ENCODE measurements at regions of chr10 and their contacts with region 1.

Region 1: DNA sequence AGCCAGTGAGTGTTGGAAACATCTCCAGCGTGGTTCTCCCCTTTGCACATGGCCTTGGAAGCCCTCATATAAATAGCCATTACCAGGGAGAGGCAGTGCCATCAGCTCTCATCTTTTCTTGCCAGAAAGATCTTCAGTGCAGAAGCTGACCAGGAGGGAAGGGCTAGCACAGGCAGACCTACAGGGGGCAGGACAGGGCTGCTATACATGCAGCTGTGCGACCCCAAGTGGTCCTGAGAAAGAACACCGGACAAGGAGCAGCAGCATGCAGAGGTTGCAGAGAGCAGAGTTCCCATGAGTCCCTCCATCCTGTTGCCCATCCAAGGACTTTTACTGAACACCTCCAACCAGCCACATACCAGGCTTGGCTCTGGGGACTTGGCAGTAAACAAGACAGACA is 17.1 kb downstream of the GRID1 start:
- DNase-seq: no peak
- H3K4me3 ChIP-seq: no peak overlapping the region
- H3K27ac ChIP-seq: no peak overlapping the region
- H3K4me1 ChIP-seq: no peaks in the 10 kb centered on the region
- H3K27me3 ChIP-seq: no peaks in the 10 kb centered on the region
- CTCF ChIP-seq: no peak
- EP300 ChIP-seq: no peak
- POLR2A ChIP-seq: no peak

Region 2: GRCh38 chr10:86152354-86152753 is 197.1 kb before region 1 on chr10:
- intact Hi-C with region 1: loop called in 1 of 4 experiments (anchors 5 kb)
- DNase-seq: no peak
- H3K4me3 ChIP-seq: no peak overlapping the region
- H3K27ac ChIP-seq: no peak overlapping the region
- H3K4me1 ChIP-seq: no peaks in the 10 kb centered on the region
- H3K27me3 ChIP-seq: no peaks in the 10 kb centered on the region
- CTCF ChIP-seq: no peak
- EP300 ChIP-seq: no peak
- POLR2A ChIP-seq: no peak

Region 3: DNA sequence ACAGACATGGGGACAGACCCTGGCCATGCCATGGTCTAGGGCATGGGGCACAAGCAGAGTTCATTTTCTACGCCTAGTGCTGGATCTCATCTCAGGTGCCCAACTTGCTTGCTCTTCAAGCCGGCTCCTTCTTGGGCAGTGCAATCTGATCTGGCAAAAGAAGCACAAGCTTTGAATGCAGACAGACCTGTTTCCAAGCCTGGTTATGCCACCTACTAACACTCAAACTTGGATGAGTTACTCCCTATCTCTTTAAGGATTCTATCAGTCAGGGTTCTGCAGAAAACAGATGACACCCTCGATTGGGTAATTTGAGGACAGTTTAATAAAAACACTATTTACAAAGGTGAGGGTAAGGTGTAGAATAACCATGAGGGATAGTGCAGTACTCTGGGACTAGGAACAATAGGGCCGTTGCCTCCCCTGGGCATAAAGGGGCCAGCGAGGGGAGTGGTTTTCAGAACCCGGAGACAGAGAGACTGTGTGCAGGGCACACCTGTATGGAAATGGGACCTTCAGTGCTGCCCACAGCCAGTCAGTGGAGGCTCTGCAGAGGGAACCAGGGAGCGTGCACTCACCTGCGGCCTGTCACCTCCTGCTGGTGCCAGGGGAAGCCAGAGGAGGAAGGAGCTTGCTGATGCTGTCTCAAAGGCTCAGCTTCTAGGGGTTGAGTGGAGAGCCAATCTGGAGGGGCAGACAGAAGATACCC is 207.2 kb after region 1 on chr10:
- intact Hi-C with region 1: no loop called
- DNase-seq: no peak
- H3K4me3 ChIP-seq: no peak overlapping the region
- H3K27ac ChIP-seq: no peak overlapping the region
- H3K4me1 ChIP-seq: no peaks in the 10 kb centered on the region
- H3K27me3 ChIP-seq: no peaks in the 10 kb centered on the region
- CTCF ChIP-seq: no peak
- EP300 ChIP-seq: no peak
- POLR2A ChIP-seq: no peak